AG04449 (cell line): ENCODE measurements at regions of chr4 and their contacts with region 1.

Region 1: DNA sequence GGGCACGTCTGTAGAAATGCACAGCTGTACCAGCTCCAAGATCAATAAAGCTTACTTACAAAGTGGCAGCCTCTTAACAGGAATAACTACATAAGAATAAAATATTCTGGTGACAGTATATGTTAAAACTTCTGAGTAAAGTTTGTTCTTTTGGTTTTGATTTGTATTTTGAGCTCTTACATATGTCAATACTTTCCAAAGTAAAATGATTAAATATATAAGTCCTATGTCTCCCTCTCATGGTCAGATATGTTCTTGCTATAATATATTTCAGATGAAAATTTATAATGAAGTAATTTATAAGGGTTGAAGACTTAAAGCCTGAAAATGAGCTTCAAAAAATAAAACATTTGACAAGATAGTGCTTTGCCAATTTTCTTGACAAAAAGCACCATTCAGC is 254.4 kb downstream of the NPFFR2 start:
- DNase-seq: no peak
- H3K4me3 ChIP-seq: no peak overlapping the region
- CTCF ChIP-seq: no peak

Region 2: GRCh38 chr4:71732706-71733105 is 553.5 kb before region 1 on chr4:
- CTCF ChIA-PET with region 1: interaction called, 10 read pairs
- POLR2A ChIA-PET with region 1: no interaction called
- DNase-seq: peak; percentile 10
- H3K4me3 ChIP-seq: no peak overlapping the region
- CTCF ChIP-seq: peak; percentile 22

Region 3: GRCh38 chr4:72302981-72303704 is 17.0 kb after region 1 on chr4:
- CTCF ChIA-PET with region 1: interaction called, 29 read pairs
- POLR2A ChIA-PET with region 1: no interaction called
- DNase-seq: no peak
- H3K4me3 ChIP-seq: no peak overlapping the region
- CTCF ChIP-seq: peak; percentile 65